Cardiac septum (tissue), 1 donor: ENCODE measurements at regions of chr3 and their contacts with region 1.

Region 1: GRCh38 chr3:167304077-167304476 is 76.0 kb downstream of the ZBBX start:
- DNase-seq: no peak

Region 2: DNA sequence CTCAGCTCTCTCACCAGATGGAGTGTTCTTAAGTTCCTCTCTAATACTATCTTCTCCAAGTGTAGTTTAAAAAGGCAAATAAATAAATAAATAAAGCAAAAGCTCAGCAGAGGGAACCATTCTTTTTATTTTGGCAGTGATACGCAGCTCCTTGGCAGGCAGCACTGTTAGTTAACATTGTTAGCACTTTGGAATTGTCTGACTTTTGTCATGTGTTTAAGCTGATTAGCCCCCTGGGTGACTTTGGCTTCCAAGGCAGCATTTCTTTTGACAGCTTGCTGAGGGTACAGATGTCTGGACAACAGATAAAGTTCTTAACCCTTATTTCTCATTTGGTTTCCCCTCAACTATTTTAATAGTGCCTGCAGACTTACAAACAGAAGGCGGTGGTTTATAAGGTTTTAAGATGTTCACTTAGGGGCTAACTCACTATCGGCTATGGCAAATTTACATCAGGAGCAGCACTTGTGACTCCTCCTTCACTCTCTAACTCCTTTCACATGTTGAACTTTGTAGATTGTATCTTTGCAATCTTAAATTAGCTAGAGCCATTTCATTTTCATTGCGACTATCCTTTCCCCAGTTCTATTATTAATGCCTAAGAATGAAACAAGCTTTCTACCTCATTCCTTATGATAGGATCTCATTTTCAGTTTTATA is 137.4 kb before region 1 on chr3:
- intact Hi-C with region 1: loop called (anchors 2 kb)
- DNase-seq: no peak

Region 3: GRCh38 chr3:167330993-167331785 is 27.1 kb after region 1 on chr3:
- intact Hi-C with region 1: no loop called
- DNase-seq: no peak